ENCODE measurements at regions of chr5 and their contacts with region 1.

Region 1: GRCh38 chr5:71623221-71623794 is 36.2 kb downstream of the MCCC2 start:
- DNase-seq: no peak
- H3K4me3 Mint-ChIP-seq: no peak overlapping the region
- H3K27ac Mint-ChIP-seq: no peak overlapping the region
- H3K4me1 Mint-ChIP-seq: peaks cover 5% of the 10 kb centered on the region
- H3K27me3 Mint-ChIP-seq: no peaks in the 10 kb centered on the region

Region 2: GRCh38 chr5:71569748-71570509 is 53.4 kb before region 1 on chr5:
- CTCF ChIA-PET with region 1: no interaction called
- POLR2A ChIA-PET with region 1: no interaction called
- intact Hi-C with region 1: loop called (anchors 10 kb)
- DNase-seq: no peak
- H3K4me3 Mint-ChIP-seq: no peak overlapping the region
- H3K27ac Mint-ChIP-seq: no peak overlapping the region
- H3K4me1 Mint-ChIP-seq: no peaks in the 10 kb centered on the region
- H3K27me3 Mint-ChIP-seq: no peaks in the 10 kb centered on the region

Region 3: GRCh38 chr5:71790433-71790832 is 167.1 kb after region 1 on chr5:
- CTCF ChIA-PET with region 1: no interaction called
- POLR2A ChIA-PET with region 1: no interaction called
- intact Hi-C with region 1: no loop called
- DNase-seq: no peak
- H3K4me3 Mint-ChIP-seq: no peak overlapping the region
- H3K27ac Mint-ChIP-seq: no peak overlapping the region
- H3K4me1 Mint-ChIP-seq: no peaks in the 10 kb centered on the region
- H3K27me3 Mint-ChIP-seq: peaks cover 9% of the 10 kb centered on the region

Region 4: DNA sequence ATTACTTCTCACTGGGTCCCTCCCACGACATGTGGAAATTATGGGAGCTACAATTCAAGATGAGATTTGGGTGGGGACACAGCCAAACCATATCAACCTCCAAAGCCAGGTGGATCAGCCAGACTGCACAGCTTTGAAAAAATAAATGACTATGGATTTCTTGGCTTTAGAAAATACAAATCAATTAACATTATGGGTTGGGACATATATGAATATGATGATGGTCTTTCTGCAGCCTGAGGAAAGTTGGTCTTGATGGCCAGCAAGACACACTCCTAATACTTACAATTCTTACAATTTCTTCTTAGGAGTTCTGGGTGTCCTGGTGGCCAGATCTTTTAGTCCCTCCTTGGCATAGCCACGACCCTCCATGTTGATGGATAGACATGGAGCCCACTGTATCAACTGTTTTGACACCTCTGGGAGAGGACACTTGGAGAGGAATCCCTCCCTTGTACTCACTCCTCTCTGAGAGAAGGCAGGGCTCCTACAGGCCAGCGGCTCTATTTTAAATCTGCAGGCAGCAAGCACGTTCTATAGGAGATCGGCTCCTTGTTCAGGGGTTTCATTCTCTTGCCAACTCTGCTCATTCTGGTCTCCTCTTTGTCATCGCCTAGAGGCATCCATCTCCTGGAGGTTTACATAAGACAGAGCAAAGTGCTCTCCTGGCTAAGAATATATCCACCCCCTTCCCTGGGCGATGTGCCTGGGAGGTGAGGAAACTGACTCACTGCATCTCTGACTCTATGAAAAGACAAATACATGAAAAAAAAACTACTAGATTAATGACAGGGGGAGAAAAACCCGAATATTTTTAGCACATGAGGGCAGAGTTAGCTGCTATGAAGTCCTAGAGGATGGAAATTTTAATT is 241.7 kb after region 1 on chr5:
- CTCF ChIA-PET with region 1: no interaction called
- POLR2A ChIA-PET with region 1: no interaction called
- intact Hi-C with region 1: no loop called
- DNase-seq: no peak
- H3K4me3 Mint-ChIP-seq: no peak overlapping the region
- H3K27ac Mint-ChIP-seq: no peak overlapping the region
- H3K4me1 Mint-ChIP-seq: no peaks in the 10 kb centered on the region
- H3K27me3 Mint-ChIP-seq: peaks cover 14% of the 10 kb centered on the region